ENCODE measurements at regions of chr14 and their contacts with region 1.

Region 1: GRCh38 chr14:67526676-67527459 is 6.2 kb upstream of the PLEKHH1 start:
- DNase-seq: peak; percentile 62
- H3K4me3 ChIP-seq: no peak overlapping the region
- H3K27ac ChIP-seq: no peak overlapping the region
- H3K4me1 ChIP-seq: no peaks in the 10 kb centered on the region
- H3K27me3 ChIP-seq: peaks cover 29 to 36% of the 10 kb centered on the region in 2 experiments
- CTCF ChIP-seq: peak; percentile 56 to 70
- POLR2A ChIP-seq: no peak

Region 2: DNA sequence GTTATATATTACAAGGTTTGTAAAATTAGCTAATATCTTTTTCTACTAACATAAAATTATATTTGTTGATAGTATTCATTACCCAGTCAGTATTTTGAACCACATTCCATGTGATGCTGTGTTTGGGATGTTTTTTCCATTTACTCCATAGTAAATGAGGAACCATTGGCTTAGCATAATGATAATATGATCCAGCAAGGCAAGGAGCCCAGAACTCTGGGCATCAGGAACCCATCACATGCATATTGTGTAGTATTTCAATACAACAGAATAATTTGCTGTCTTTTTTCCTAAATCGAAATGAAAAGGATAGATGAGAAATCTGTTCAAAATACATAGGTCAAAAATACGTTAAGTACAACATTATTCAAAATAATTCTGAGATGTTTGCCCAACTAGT is 386.3 kb before region 1 on chr14:
- CTCF ChIA-PET with region 1: no interaction called
- POLR2A ChIA-PET with region 1: no interaction called
- dilution Hi-C with region 1: no loop called
- intact Hi-C with region 1: no loop called
- DNase-seq: no peak
- H3K4me3 ChIP-seq: no peak overlapping the region
- H3K27ac ChIP-seq: no peak overlapping the region
- H3K4me1 ChIP-seq: no peaks in the 10 kb centered on the region
- H3K27me3 ChIP-seq: no peaks in the 10 kb centered on the region
- CTCF ChIP-seq: no peak
- POLR2A ChIP-seq: no peak

Region 3: GRCh38 chr14:67514650-67515385 is 12.1 kb before region 1 on chr14:
- CTCF ChIA-PET with region 1: interaction called, 54 read pairs
- POLR2A ChIA-PET with region 1: no interaction called
- dilution Hi-C with region 1: no loop called
- intact Hi-C with region 1: no loop called
- DNase-seq: peak; percentile 15
- H3K4me3 ChIP-seq: peak overlapping the region; percentile 58 to 81 (median 71)
- H3K27ac ChIP-seq: no peak overlapping the region
- H3K4me1 ChIP-seq: peaks cover 3% of the 10 kb centered on the region
- H3K27me3 ChIP-seq: peaks cover 37 to 64% of the 10 kb centered on the region in 2 experiments
- CTCF ChIP-seq: no peak
- POLR2A ChIP-seq: no peak

Region 4: DNA sequence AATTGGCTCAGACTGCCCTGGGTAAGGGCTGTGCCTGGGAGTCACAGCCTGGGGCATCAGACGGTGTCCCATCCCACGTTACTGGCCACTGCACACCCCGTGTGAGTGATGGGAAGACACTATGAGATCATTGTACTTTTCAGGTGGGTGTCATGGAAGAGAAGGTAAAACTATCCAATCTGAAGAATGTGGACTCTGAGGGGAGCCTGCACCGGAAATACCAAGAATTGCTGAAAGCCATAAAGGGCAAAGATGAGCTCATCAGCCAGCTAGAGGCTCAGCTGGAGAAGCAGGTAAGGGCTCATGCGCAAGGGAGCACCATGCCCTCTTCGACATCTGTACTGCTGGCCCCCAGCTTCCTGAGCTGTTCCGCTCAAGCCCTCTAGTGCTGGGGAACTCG is 30.3 kb after region 1 on chr14:
- CTCF ChIA-PET with region 1: interaction called, 40 read pairs
- POLR2A ChIA-PET with region 1: no interaction called
- dilution Hi-C with region 1: no loop called
- intact Hi-C with region 1: no loop called
- DNase-seq: no peak
- H3K4me3 ChIP-seq: no peak overlapping the region
- H3K27ac ChIP-seq: no peak overlapping the region
- H3K4me1 ChIP-seq: no peaks in the 10 kb centered on the region
- H3K27me3 ChIP-seq: peaks cover 0 to 2% of the 10 kb centered on the region in 2 experiments
- CTCF ChIP-seq: no peak
- POLR2A ChIP-seq: no peak

Region 5: GRCh38 chr14:67583711-67584644 is 57.1 kb after region 1 on chr14:
- CTCF ChIA-PET with region 1: interaction called, 33 read pairs
- POLR2A ChIA-PET with region 1: no interaction called
- dilution Hi-C with region 1: no loop called
- intact Hi-C with region 1: no loop called
- DNase-seq: peak; percentile 53
- H3K4me3 ChIP-seq: no peak overlapping the region
- H3K27ac ChIP-seq: no peak overlapping the region
- H3K4me1 ChIP-seq: no peaks in the 10 kb centered on the region
- H3K27me3 ChIP-seq: peaks cover 0 to 2% of the 10 kb centered on the region in 2 experiments
- CTCF ChIP-seq: peak; percentile 56 to 76
- POLR2A ChIP-seq: no peak

Region 6: DNA sequence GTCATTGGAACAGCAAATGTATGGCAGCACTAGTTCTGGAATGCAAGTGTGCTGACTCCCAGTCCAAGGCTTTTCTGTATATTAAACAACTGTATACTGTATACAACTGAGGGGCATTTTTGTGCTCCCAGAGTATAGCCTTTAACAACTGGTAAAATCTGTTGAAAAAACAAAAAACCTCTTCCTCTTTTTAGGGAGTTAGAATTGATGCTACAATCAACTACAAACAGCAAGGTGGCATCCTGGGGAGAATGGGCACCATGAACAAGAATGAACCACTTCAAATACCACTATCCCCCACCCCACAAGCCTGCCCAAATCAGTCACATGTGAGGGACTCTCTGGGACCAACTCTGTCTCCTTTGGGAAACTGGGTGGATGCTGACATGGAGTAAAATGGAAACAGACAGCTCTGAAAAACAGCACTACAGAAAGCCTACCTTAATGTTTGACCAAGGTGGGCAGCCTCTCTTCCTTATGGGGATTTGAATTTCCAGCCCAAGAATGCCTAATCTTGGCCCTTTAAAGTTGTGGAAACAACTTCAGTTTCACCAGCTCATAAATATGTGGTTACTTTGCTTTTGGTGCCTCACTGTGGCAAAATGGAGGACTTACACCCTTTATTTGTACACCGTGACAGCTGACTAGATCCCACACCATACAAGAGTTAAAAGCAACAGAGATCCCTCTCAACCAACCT is 140.0 kb after region 1 on chr14:
- CTCF ChIA-PET with region 1: interaction called, 33 read pairs
- POLR2A ChIA-PET with region 1: no interaction called
- dilution Hi-C with region 1: no loop called
- intact Hi-C with region 1: loop called (anchors 2 kb)
- DNase-seq: peak; percentile 78
- H3K4me3 ChIP-seq: no peak overlapping the region
- H3K27ac ChIP-seq: no peak overlapping the region
- H3K4me1 ChIP-seq: no peaks in the 10 kb centered on the region
- H3K27me3 ChIP-seq: no peaks in the 10 kb centered on the region
- CTCF ChIP-seq: peak; percentile 39 to 50
- POLR2A ChIP-seq: no peak